Upper lobe of right lung (tissue), 1 donor: ENCODE measurements at regions of chr2 and their contacts with region 1.

Region 1: DNA sequence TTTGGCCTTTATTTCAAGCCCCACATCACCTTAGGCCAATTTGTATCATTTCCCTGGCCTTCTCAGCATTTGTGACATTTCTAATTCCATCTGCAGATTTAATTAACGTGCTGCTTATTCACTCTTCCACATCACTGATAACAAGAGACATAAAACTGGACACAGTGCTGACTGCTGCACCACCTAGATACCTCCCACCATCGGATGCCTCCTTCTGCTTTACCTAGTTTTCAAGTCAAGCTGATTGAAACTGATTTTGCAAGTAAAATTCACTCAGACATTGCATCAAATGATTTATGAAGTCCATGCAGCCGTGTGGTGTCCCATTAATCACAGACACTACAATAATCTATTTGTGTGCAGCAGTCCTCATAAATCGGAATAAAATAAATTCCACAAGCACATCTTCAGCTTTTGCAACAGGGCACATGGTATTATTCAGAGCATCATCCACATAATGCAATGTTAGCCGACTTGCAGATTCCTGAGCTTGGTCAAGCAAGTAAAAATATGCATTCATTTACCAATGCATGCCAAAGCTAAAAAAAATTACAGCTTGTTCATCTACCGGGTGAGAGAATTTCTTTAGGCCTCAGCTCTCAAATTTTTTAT is 15.9 kb upstream of the CRIM1 start:
- DNase-seq: no peak
- ATAC-seq: no peak
- H3K4me3 ChIP-seq: no peak overlapping the region
- H3K27ac ChIP-seq: no peak overlapping the region
- H3K4me1 ChIP-seq: no peaks in the 10 kb centered on the region
- H3K27me3 ChIP-seq: no peaks in the 10 kb centered on the region
- CTCF ChIP-seq: no peak

Region 2: GRCh38 chr2:36650031-36650430 is 310.3 kb after region 1 on chr2:
- intact Hi-C with region 1: loop called (anchors 10 kb)
- DNase-seq: no peak
- ATAC-seq: peak; percentile 60
- H3K4me3 ChIP-seq: no peak overlapping the region
- H3K27ac ChIP-seq: no peak overlapping the region
- H3K4me1 ChIP-seq: no peaks in the 10 kb centered on the region
- H3K27me3 ChIP-seq: no peaks in the 10 kb centered on the region
- CTCF ChIP-seq: no peak